A549 (cell line): ENCODE measurements at regions of chr19 and their contacts with region 1.

Region 1: DNA sequence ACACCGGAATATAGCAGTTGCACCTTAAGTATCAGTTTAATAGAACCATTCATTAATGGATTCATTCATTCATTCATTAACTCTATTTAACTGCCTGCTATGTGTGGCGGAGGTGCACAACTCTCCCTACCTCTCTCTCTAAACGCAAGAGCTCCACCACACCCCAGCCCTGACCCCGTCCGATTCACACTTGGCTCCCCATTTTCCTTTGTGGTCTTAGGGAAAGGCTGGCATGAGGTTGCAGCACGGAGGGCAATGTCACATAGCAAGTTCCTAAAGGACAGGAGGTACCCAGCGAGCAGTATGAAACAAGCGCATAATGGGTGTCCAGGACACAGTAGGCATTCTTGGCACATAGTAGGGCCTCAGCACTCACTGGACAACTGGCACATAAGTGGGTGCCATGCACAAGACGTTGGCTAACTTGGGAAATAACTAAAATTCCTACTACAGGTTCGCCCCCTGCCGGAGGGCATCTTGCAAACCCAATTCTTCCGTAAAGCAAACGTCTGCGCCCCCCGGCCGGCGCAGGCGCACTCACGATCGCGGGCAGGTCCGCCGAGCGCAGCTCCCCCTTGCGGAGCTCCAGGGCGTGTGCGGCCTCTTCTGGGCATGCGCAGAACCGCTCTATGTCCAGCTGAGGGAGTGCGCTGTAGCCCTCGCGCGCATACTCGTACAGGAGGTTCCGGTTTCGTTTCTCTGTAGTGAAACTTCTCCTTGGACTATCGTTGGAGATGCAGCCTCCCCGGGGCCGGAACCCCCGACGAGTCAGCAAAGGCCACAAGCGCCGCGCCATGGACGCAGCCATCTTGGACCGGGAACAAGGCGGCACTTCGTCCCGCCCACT is at the start of gene SARS2:
- DNase-seq: peak; percentile 98 to 99
- ATAC-seq: peak; percentile 65 to 69
- H3K4me3 ChIP-seq: peak within 1 kb of the TSS; percentile 66
- H3K27ac ChIP-seq: peak within 1 kb of the TSS; percentile 87
- H3K4me1 ChIP-seq: peaks cover 19% of the 10 kb centered on the region
- CTCF ChIP-seq: peak; percentile 100
- EP300 ChIP-seq: no peak
- POLR2A ChIP-seq: no peak
- RAD21 ChIP-seq: peak; percentile 88 to 98
- polyA plus RNA-seq, gene SARS2: 46.1 and 46.7 TPM in 2 replicates

Region 2: DNA sequence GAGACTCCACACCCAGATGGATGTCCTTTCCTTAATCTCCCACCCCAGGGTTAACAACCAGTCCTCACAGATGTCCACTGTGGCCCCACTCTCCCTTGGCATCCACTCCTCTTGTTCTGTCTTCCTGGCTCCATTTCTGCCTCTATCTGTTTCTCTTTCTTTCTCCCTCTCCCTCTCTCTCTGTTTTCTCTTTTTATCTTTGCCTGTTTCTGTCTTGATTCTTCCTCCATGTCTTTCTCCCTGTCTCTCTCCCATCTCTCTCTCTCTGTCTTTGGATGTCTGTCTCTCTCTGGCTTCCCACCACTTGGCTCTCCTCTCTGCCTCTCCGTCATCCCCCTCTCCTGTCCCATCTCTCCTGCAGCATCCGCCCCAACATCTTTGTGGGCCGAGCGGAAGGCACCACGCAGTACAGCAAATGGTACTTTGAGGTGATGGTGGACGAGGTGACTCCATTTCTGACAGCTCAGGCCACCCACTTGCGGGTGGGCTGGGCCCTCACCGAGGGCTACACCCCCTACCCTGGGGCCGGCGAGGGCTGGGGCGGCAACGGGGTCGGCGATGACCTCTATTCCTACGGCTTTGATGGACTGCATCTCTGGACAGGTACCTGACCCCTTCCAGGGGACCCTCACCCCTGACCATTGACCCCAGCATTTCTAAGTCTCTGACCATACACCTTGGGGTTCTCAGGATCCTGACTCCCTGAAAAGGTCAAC is 472.3 kb before region 1 on chr19:
- CTCF ChIA-PET with region 1: no interaction called
- POLR2A ChIA-PET with region 1: no interaction called
- DNase-seq: no peak
- ATAC-seq: peak; percentile 6 to 21; a peak in 2 of 6 replicates
- H3K4me3 ChIP-seq: no peak overlapping the region
- H3K27ac ChIP-seq: no peak overlapping the region
- H3K4me1 ChIP-seq: no peaks in the 10 kb centered on the region
- CTCF ChIP-seq: no peak
- EP300 ChIP-seq: no peak
- POLR2A ChIP-seq: 0 out of 2 replicates have a peak, but pooled peaks have one; percentile 4
- RAD21 ChIP-seq: no peak

Region 3: DNA sequence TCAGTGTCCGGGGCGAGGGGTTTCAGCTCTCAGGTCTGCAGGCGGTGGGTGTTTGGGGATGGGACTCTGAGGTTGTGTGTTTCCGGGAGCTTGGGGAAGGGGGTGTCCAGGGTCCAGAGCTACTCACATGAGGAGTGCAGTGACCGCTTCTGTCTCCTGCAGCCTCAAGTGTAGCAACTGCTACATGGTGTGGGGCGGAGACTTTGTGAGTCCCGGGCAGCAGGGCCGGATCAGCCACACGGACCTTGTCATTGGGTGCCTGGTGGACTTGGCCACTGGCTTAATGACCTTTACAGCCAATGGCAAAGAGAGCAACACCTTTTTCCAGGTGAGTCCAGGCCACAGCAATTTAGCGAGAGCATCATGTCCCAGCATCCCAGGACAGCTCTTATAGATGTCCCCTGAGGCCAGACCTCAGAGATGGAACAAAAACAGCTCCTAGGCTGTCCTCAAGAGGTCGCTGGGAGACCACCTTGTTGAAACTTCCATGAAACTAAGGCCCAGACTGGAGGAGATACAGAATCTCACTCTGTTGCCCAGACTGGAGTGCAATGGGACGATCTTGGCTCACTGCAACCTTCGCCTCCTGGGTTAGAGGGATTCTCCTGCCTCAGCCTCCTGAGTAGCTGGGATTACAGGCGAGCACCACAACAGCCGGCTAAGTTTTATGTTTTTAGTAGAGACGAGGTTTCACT is 451.7 kb before region 1 on chr19:
- CTCF ChIA-PET with region 1: interaction called, 14 read pairs
- POLR2A ChIA-PET with region 1: interaction called, 5 read pairs
- DNase-seq: peak; percentile 79 to 90
- ATAC-seq: peak; percentile 83 to 91
- H3K4me3 ChIP-seq: no peak overlapping the region
- H3K27ac ChIP-seq: no peak overlapping the region
- H3K4me1 ChIP-seq: no peaks in the 10 kb centered on the region
- CTCF ChIP-seq: peak; percentile 65
- EP300 ChIP-seq: no peak
- POLR2A ChIP-seq: no peak
- RAD21 ChIP-seq: peak; percentile 75 to 92

Region 4: GRCh38 chr19:38711726-38712153 is 218.4 kb before region 1 on chr19:
- CTCF ChIA-PET with region 1: interaction called, 15 read pairs
- POLR2A ChIA-PET with region 1: no interaction called
- DNase-seq: no peak
- ATAC-seq: peak; percentile 3 to 10; a peak in 3 of 6 replicates
- H3K4me3 ChIP-seq: no peak overlapping the region
- H3K27ac ChIP-seq: peak overlapping the region; percentile 1 to 50; a peak in 3 of 6 replicates
- H3K4me1 ChIP-seq: peaks cover 46% of the 10 kb centered on the region
- CTCF ChIP-seq: no peak
- EP300 ChIP-seq: no peak
- POLR2A ChIP-seq: no peak
- RAD21 ChIP-seq: no peak

Region 5: DNA sequence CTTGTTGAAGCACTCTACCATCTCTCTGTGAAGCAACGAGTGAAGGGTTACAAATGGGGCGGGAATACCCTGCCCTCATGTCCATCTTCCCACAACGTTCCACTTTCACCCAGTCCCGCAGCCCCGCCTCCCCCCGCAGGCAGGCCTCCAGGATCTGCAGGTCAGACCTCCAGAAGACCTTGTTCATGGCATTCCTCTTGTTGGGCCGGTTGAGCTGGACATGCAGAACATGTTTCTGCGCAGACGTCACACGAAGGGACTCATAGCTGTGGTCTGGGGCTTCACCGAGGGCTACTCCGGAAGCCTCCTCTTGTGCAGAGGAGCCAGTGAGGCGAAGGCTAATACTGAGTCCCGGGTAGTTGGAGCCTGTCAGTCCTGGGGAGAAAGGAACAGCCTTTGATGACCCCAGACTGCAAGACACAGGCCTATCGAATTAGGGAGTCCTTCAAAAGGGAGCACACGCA is 99.0 kb before region 1 on chr19:
- CTCF ChIA-PET with region 1: interaction called, 18 read pairs
- POLR2A ChIA-PET with region 1: interaction called, 7 read pairs
- DNase-seq: peak; percentile 73 to 78
- ATAC-seq: peak; percentile 57 to 58
- H3K4me3 ChIP-seq: peak overlapping the region; percentile 55
- H3K27ac ChIP-seq: peak overlapping the region; percentile 88
- H3K4me1 ChIP-seq: peaks cover 49% of the 10 kb centered on the region
- CTCF ChIP-seq: no peak
- EP300 ChIP-seq: no peak
- POLR2A ChIP-seq: no peak
- RAD21 ChIP-seq: no peak

Region 6: DNA sequence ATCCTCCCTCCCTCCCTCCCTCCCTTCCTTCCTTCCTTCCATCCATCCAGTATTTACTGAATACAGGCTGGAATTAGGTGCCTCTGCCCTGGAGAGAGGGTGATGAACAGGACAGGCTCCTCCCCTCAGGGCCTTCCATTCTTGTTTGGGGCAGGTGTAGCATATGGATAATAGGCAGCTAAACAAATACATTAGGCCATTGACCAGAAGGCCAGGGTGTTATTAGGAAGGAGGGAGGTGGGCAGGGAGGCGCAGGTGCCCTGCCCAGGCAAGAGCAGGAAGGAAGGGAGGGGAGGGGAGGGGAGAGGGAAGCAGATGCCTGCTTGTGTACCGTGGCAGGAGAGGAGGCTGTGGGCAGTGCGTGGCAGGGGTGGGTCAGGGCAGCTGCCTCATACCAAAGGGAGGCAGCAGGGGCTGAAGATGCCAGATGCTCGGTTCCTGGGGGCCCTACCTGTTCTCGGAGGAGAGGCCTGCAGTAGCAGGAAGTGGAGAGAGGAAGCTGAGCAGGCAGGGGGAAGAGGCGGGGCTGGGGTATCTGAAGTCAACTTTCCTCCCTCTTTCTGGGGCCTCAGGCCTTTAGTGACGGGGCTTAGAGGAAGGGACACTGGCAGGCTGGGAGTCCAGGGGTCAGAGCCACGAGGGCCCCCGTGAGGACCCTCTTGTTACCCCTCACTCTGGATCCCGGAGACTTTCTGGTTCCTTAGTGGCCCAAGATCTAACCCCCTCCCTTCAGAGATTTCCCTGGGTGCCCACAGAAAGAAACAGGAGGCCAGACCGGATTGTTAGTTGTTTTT is 52.2 kb before region 1 on chr19 and contains the start of gene RINL:
- CTCF ChIA-PET with region 1: interaction called, 45 read pairs
- POLR2A ChIA-PET with region 1: interaction called, 3 read pairs
- DNase-seq: no peak
- ATAC-seq: peak; percentile 17 to 20; a peak in 4 of 6 replicates
- H3K4me3 ChIP-seq: no peak within 1 kb of the TSS
- H3K27ac ChIP-seq: peak within 1 kb of the TSS; percentile 28 to 63
- H3K4me1 ChIP-seq: peaks cover 4% of the 10 kb centered on the region; the same call in 2 of the 3 replicates
- CTCF ChIP-seq: no peak
- EP300 ChIP-seq: no peak
- POLR2A ChIP-seq: no peak
- RAD21 ChIP-seq: no peak
- polyA plus RNA-seq, gene RINL: 6.3 and 6.6 TPM in 2 replicates

Region 7: GRCh38 chr19:38917516-38918491 is 12.3 kb before region 1 on chr19:
- CTCF ChIA-PET with region 1: interaction called, 105 read pairs
- POLR2A ChIA-PET with region 1: interaction called, 20 read pairs
- DNase-seq: peak; percentile 75 to 90
- ATAC-seq: peak; percentile 72 to 84
- H3K4me3 ChIP-seq: no peak overlapping the region
- H3K27ac ChIP-seq: peak overlapping the region in 1 of 2 experiments; percentile 14; a peak in 1 of 6 replicates
- H3K4me1 ChIP-seq: 0 out of 3 replicates have a peak, but pooled peaks cover 5% of the 10 kb centered on the region
- CTCF ChIP-seq: peak; percentile 49
- EP300 ChIP-seq: no peak
- POLR2A ChIP-seq: no peak
- RAD21 ChIP-seq: peak; percentile 48 to 59

Region 8: GRCh38 chr19:39003796-39004195 is 73.6 kb after region 1 on chr19:
- CTCF ChIA-PET with region 1: no interaction called
- POLR2A ChIA-PET with region 1: no interaction called
- DNase-seq: no peak
- ATAC-seq: no peak
- H3K4me3 ChIP-seq: no peak overlapping the region
- H3K27ac ChIP-seq: no peak overlapping the region
- H3K4me1 ChIP-seq: no peaks in the 10 kb centered on the region
- CTCF ChIP-seq: no peak
- EP300 ChIP-seq: no peak
- POLR2A ChIP-seq: no peak
- RAD21 ChIP-seq: no peak